ENCODE measurements at regions of chr18 and their contacts with region 1.

Region 1: DNA sequence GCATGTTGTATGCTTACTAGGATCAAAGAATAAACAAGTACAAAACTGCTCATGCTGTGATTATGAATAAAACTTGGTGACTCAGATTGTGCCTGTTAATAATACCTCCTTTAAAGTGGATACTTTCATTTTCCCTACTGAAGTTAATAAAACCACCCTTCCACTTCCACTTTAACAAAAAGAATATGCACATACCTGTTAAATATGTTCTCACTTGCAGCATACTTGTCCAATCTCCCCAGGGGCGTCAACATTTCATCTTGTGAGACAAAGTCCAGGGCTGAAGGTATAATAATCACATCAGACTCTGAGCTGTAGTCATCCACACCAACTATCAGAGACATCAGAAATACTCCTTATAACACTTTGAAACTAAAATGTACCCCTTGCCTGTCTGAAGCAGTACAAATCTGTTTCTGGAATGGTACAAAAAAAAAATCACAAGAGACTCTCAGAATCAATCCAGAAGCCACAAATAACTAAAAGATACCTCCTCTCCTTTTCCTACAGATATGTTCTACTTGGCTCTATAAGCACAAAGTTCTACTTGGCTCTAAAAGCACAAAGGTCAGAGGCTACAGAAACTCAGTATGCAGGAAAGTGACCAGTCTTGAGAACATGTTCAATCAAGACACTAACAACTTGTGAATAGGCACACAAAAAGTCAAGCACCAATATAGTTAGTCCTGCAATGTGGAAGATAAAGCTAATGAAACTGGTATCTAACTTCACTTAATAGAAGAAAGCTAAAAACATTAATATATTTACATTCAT is 19.3 kb downstream of the PPP4R1 start:
- DNase-seq: peak; percentile 58
- ATAC-seq: peak; percentile 85
- H3K4me3 ChIP-seq: peak overlapping the region; percentile 32; the same call in 1 of the 2 replicates
- H3K27ac ChIP-seq: peak overlapping the region; percentile 33; the same call in 1 of the 2 replicates
- H3K4me1 ChIP-seq: peaks cover 7% of the 10 kb centered on the region
- H3K27me3 ChIP-seq: no peaks in the 10 kb centered on the region
- CTCF ChIP-seq: no peak
- POLR2A ChIP-seq: no peak
- RAD21 ChIP-seq: no peak

Region 2: GRCh38 chr18:9659499-9660375 is 64.7 kb after region 1 on chr18:
- CTCF ChIA-PET with region 1: no interaction called
- POLR2A ChIA-PET with region 1: no interaction called
- dilution Hi-C with region 1: no loop called
- in situ Hi-C with region 1: no loop called
- intact Hi-C with region 1: loop called (anchors 1 kb)
- DNase-seq: no peak
- ATAC-seq: no peak
- H3K4me3 ChIP-seq: no peak overlapping the region
- H3K27ac ChIP-seq: no peak overlapping the region
- H3K4me1 ChIP-seq: no peaks in the 10 kb centered on the region
- H3K27me3 ChIP-seq: no peaks in the 10 kb centered on the region
- CTCF ChIP-seq: no peak
- POLR2A ChIP-seq: no peak
- RAD21 ChIP-seq: no peak

Region 3: DNA sequence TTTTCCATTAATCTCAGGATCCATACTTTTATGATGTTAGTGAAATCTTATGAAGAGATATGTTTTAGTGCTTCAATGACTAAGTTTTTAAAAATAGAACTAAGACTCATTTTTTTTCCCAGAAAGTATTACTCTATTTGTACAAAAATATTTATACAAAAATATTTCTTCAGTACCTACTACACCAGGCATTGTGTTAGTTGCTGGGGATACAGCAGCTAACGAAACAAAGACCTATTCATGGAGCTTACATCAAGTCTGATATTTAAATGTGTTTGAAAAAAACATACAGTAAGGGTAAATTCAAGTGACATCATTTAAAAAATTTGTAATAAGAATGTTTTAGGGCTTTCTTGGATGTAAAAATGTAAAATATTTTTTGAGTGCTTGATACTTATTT is 330.4 kb after region 1 on chr18:
- CTCF ChIA-PET with region 1: no interaction called
- POLR2A ChIA-PET with region 1: no interaction called
- dilution Hi-C with region 1: no loop called
- in situ Hi-C with region 1: no loop called
- intact Hi-C with region 1: loop called (anchors 5 kb)
- DNase-seq: peak; percentile 70
- ATAC-seq: peak; percentile 59
- H3K4me3 ChIP-seq: no peak overlapping the region
- H3K27ac ChIP-seq: no peak overlapping the region
- H3K4me1 ChIP-seq: peaks cover 5% of the 10 kb centered on the region
- H3K27me3 ChIP-seq: no peaks in the 10 kb centered on the region
- CTCF ChIP-seq: no peak
- POLR2A ChIP-seq: no peak
- RAD21 ChIP-seq: no peak

Measured in IMR-90 (cell line).